ENCODE measurements at regions of chr12 and their contacts with region 1.

Region 1: GRCh38 chr12:49866859-49867579 is 24.1 kb upstream of the BCDIN3D start:
- DNase-seq: peak; percentile 65 to 84 (median 74)
- H3K4me3 ChIP-seq: no peak overlapping the region
- H3K27ac ChIP-seq: peak overlapping the region in 46 of 59 donors; percentile 13 to 95 (median 84)
- H3K27me3 ChIP-seq: no peaks in the 10 kb centered on the region
- CTCF ChIP-seq: peak; percentile 80 to 99 (median 97)

Region 2: DNA sequence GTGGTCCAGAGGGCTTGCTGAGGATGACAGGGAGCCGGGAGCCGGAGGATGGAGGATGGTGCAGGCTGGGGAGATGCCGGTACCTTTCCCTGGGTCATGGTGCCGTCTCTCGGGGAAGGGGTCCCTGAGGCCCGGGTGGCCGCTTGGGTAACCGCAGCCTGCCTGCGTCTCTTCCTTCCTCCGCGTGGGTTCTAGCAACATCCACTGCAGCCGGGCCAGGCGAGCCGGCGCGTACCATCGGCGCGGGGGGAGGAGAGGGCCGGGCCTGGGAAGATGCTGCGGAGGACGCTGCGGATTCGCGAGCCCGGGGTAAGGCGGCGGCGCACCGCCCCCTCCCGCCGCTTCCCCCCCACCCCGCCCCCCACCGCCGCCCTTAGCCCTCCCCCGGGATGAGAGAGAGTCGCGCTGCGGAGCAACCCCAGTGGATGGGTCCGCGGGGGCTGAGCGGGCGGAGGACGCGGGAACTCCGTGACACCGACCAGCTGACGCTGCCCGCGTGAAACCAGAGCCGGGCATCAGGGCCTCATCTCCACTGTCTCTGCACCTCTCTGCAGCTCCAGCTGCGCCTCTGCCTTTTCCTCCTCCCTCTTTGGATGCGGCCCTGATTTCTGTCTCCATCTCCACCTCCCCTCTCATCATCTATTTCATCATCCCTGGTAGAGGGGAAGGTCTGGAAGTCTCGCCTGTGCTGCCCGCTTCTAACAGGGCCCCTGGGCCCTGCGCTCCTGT is 36.8 kb after region 1 on chr12 and contains the start of gene FAIM2:
- intact Hi-C with region 1: loop called (anchors 2 to 5 kb)
- DNase-seq: peak; percentile 84 to 95 (median 92)
- H3K4me3 ChIP-seq: peak within 1 kb of the TSS; percentile 56 to 89 (median 76)
- H3K27ac ChIP-seq: peak within 1 kb of the TSS; percentile 87 to 100 (median 98)
- H3K27me3 ChIP-seq: no peaks in the 10 kb centered on the region
- CTCF ChIP-seq: peak in 29 of 56 donors; percentile 3 to 58 (median 27)
- total RNA-seq, gene FAIM2: 390 to 1,056 (median 722) TPM

Region 3: DNA sequence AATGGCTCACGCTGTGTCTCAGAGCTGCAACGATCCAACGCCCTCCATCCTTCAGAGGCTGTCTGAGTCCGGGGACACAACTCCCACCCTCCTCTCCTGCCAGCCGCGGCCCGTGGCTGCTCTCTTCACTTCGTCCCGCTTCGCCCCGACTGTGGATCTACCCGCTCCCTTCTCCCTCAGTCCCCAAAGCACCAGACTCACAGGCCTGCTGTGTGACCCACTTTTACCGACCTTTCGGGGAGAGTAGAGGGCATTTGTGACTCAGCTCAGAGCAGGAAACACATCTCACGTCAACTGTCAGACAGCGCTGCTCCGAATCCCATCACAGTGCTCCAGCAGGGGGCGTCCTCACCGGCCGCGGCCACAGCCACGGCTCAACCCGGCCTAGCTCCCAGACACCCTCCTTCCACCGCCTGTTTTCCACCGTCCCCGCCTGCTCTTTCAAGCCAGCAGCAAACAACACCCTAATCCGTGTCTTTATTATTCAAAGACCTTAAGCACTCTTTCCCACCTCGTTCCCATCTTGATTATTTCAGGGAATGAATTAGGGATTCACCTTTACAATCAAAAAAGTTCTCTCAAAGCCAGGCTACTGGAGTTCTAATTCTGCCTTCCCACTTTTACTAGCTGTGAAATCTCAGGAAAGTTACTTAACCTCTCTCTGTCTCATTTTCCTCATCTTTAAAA is 78.5 kb after region 1 on chr12:
- intact Hi-C with region 1: loop called in 1 of 2 experiments (anchors 1 kb)
- DNase-seq: peak in 9 of 10 donors; percentile 63 to 87 (median 78)
- H3K4me3 ChIP-seq: peak overlapping the region in 52 of 59 donors; percentile 5 to 61 (median 41)
- H3K27ac ChIP-seq: peak overlapping the region in 18 of 59 donors; percentile 1 to 66 (median 42)
- H3K27me3 ChIP-seq: no peaks in the 10 kb centered on the region
- CTCF ChIP-seq: peak; percentile 58 to 96 (median 86)

Region 4: GRCh38 chr12:49967042-49967776 is 100.2 kb after region 1 on chr12:
- intact Hi-C with region 1: loop called (anchors 2 to 5 kb)
- DNase-seq: peak; percentile 89 to 96 (median 92)
- H3K4me3 ChIP-seq: peak overlapping the region; percentile 35 to 77 (median 58)
- H3K27ac ChIP-seq: peak overlapping the region in 47 of 59 donors; percentile 14 to 88 (median 76)
- H3K27me3 ChIP-seq: peaks cover 0 to under 1% (median 0%) of the 10 kb centered on the region in 45 donors
- CTCF ChIP-seq: peak; percentile 64 to 97 (median 85)

Region 5: DNA sequence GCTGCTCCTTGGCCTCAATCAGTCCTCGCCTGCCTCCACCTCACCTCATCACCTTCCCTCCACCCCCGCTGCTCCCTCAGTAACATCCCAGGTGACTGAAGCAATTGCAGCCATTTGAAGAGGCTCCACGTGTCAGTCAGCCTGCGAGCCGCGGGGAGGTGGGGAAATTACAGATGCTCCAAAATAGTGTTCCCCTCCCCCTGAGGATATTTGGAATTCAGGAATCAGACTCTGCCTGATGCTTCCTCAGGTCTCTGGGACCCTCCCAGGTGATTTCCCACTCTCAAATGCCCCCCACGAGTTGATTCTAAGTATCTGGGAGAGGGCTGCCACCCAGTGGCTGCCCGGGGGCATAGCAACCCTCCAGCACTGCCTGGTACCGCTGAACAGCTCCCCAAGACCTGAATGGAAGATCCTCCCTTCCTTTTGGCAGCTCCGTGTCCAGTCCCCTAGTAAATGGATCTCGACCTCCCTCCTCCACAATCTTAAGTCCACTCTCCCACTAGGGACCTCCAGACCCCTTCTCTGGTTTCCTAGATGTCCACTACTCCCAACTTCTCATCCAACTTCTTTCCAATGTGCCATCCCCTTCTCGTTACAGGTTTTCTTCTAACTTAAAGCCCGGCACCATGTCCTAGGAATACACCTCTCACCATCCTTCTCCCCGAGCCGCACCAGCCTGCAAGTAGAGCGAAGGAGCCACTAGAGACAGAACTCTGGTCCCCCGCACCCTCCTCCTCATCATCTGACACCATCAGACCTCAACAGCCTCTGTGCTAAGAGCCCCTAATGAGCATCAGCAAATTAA is 189.0 kb after region 1 on chr12:
- intact Hi-C with region 1: loop called in 1 of 2 experiments (anchors 10 kb)
- DNase-seq: peak; percentile 36 to 71 (median 64)
- H3K4me3 ChIP-seq: peak overlapping the region in 48 of 59 donors; percentile 0 to 81 (median 71)
- H3K27ac ChIP-seq: peak overlapping the region in 56 of 59 donors; percentile 8 to 90 (median 76)
- H3K27me3 ChIP-seq: no peaks in the 10 kb centered on the region
- CTCF ChIP-seq: peak; percentile 75 to 99 (median 95)

Region 6: GRCh38 chr12:50074936-50075807 is 208.2 kb after region 1 on chr12:
- intact Hi-C with region 1: loop called in 1 of 2 experiments (anchors 5 kb)
- DNase-seq: peak; percentile 80 to 88 (median 82)
- H3K4me3 ChIP-seq: peak overlapping the region in 1 of 59 donors; percentile 12
- H3K27ac ChIP-seq: peak overlapping the region in 3 of 59 donors; percentile 29 to 41 (median 37)
- H3K27me3 ChIP-seq: no peaks in the 10 kb centered on the region
- CTCF ChIP-seq: peak; percentile 71 to 98 (median 94)

Region 7: GRCh38 chr12:50174971-50175715 is 308.1 kb after region 1 on chr12:
- intact Hi-C with region 1: loop called in 1 of 2 experiments (anchors 10 kb)
- DNase-seq: no peak
- H3K4me3 ChIP-seq: peak overlapping the region in 11 of 59 donors; percentile 3 to 36 (median 16)
- H3K27ac ChIP-seq: peak overlapping the region in 21 of 59 donors; percentile 2 to 75 (median 53)
- H3K27me3 ChIP-seq: no peaks in the 10 kb centered on the region
- CTCF ChIP-seq: peak; percentile 67 to 95 (median 85)

Measured in dorsolateral prefrontal cortex (tissue), 120 donors.